ENCODE measurements at regions of chr3 and their contacts with region 1.

Region 1: DNA sequence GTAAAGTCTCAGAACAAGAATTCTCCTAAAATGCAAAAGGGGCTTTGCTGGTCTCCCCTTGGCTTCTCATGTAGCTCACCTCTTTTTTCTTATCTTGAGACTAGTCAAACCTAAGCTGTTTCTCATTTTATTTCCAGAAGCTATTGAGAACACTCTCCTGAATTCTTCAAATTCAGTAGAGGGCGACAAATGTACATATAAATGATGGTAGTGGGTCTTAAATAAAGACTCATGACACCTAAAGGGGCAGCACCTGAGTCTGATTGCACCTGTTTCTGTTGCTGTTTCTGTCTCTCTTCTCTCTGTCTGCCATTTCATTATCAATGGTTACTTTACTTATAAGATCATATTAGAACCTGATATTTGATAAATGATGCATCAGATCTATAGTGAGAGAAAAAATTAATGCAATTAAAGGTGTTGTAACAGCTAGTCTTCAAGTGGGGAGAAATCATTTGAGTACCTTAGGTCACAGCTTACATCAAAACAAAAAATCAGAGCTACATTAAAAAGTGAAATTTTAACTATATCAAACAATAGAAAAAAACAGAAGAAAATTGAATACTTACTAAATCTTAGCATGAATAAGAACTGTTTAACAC is 7.0 kb downstream of the ADIPOQ start:
- DNase-seq: peak; percentile 73
- H3K4me3 Mint-ChIP-seq: no peak overlapping the region
- H3K27ac Mint-ChIP-seq: peak overlapping the region; percentile 2
- H3K4me1 Mint-ChIP-seq: peaks cover 15% of the 10 kb centered on the region
- H3K27me3 Mint-ChIP-seq: peaks cover 22% of the 10 kb centered on the region

Region 2: GRCh38 chr3:186442162-186442561 is 407.3 kb before region 1 on chr3:
- intact Hi-C with region 1: no loop called
- DNase-seq: no peak
- H3K4me3 Mint-ChIP-seq: no peak overlapping the region
- H3K27ac Mint-ChIP-seq: no peak overlapping the region
- H3K4me1 Mint-ChIP-seq: no peaks in the 10 kb centered on the region
- H3K27me3 Mint-ChIP-seq: peaks cover 12% of the 10 kb centered on the region

Region 3: GRCh38 chr3:186882881-186883685 is 33.6 kb after region 1 on chr3:
- intact Hi-C with region 1: loop called (anchors 5 kb)
- DNase-seq: peak; percentile 80
- H3K4me3 Mint-ChIP-seq: peak overlapping the region; percentile 52
- H3K27ac Mint-ChIP-seq: peak overlapping the region; percentile 89
- H3K4me1 Mint-ChIP-seq: peaks cover 53% of the 10 kb centered on the region
- H3K27me3 Mint-ChIP-seq: no peaks in the 10 kb centered on the region

Region 4: GRCh38 chr3:187041362-187042307 is 192.2 kb after region 1 on chr3:
- intact Hi-C with region 1: loop called (anchors 1 kb)
- DNase-seq: peak; percentile 88
- H3K4me3 Mint-ChIP-seq: peak overlapping the region; percentile 77
- H3K27ac Mint-ChIP-seq: peak overlapping the region; percentile 95
- H3K4me1 Mint-ChIP-seq: peaks cover 79% of the 10 kb centered on the region
- H3K27me3 Mint-ChIP-seq: no peaks in the 10 kb centered on the region

Region 5: GRCh38 chr3:187112934-187113793 is 263.7 kb after region 1 on chr3:
- intact Hi-C with region 1: loop called (anchors 5 kb)
- DNase-seq: peak; percentile 74
- H3K4me3 Mint-ChIP-seq: no peak overlapping the region
- H3K27ac Mint-ChIP-seq: peak overlapping the region; percentile 6
- H3K4me1 Mint-ChIP-seq: peaks cover 7% of the 10 kb centered on the region
- H3K27me3 Mint-ChIP-seq: no peaks in the 10 kb centered on the region

Region 6: DNA sequence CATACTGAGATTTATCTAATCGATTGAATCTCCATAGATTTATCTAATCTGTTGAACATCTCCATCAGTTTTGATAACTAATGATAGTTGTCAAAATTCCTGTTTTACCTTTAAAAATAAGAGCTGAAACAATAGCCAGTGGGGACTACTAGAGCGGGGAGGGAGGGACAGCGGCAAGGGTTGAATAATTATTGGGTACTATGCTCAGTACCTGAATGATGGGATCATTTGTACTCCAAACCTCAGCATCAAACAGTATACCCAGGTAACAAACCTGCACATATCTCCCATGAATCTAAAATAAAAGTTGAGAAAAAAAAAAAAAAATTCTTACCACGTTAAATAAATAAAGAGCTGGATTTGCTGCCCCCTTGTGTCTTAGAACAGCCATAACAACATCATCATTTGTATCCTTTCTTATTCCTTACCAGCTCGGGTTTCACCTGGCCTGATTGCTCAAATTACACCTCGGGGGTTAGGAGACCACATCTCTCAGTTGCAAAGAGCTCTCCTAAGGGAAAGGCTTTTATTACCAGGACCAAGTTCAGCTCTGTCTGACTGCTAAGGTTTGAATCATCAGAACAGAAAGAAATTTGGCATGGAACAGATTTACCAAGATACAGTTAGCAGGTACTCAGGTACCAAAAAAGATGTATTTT is 315.5 kb after region 1 on chr3:
- intact Hi-C with region 1: loop called (anchors 1 kb)
- DNase-seq: peak; percentile 82
- H3K4me3 Mint-ChIP-seq: no peak overlapping the region
- H3K27ac Mint-ChIP-seq: no peak overlapping the region
- H3K4me1 Mint-ChIP-seq: peaks cover 4% of the 10 kb centered on the region
- H3K27me3 Mint-ChIP-seq: peaks cover 44% of the 10 kb centered on the region